Mammary epithelial cell (primary cell): ENCODE measurements at regions of chr17 and their contacts with region 1.

Region 1: GRCh38 chr17:76585818-76586593 is at the start of gene ST6GALNAC2:
- DNase-seq: peak; percentile 89
- H3K4me3 ChIP-seq: peak within 1 kb of the TSS; percentile 86 to 93 (median 92)
- H3K27ac ChIP-seq: peak within 1 kb of the TSS; percentile 93
- H3K4me1 ChIP-seq: peaks cover 39% of the 10 kb centered on the region
- H3K27me3 ChIP-seq: no peaks in the 10 kb centered on the region
- CTCF ChIP-seq: peak; percentile 17 to 64
- total RNA-seq, gene ST6GALNAC2: 65.1 to 221 TPM

Region 2: GRCh38 chr17:76432712-76433336 is 153.2 kb before region 1 on chr17:
- CTCF ChIA-PET with region 1: no interaction called
- dilution Hi-C with region 1: no loop called
- in situ Hi-C with region 1: no loop called
- intact Hi-C with region 1: no loop called
- DNase-seq: no peak
- H3K4me3 ChIP-seq: no peak overlapping the region
- H3K27ac ChIP-seq: no peak overlapping the region
- H3K4me1 ChIP-seq: peaks cover under 1% of the 10 kb centered on the region
- H3K27me3 ChIP-seq: no peaks in the 10 kb centered on the region
- CTCF ChIP-seq: peak; percentile 52 to 59

Region 3: GRCh38 chr17:76467366-76467765 is 118.6 kb before region 1 on chr17 and contains the start of gene AANAT:
- CTCF ChIA-PET with region 1: no interaction called
- dilution Hi-C with region 1: no loop called
- in situ Hi-C with region 1: no loop called
- intact Hi-C with region 1: loop called (anchors 1 kb)
- DNase-seq: no peak
- H3K4me3 ChIP-seq: no peak within 1 kb of the TSS
- H3K27ac ChIP-seq: no peak within 1 kb of the TSS
- H3K4me1 ChIP-seq: no peaks in the 10 kb centered on the region
- H3K27me3 ChIP-seq: no peaks in the 10 kb centered on the region
- CTCF ChIP-seq: no peak
- total RNA-seq, gene AANAT: not detected

Region 4: DNA sequence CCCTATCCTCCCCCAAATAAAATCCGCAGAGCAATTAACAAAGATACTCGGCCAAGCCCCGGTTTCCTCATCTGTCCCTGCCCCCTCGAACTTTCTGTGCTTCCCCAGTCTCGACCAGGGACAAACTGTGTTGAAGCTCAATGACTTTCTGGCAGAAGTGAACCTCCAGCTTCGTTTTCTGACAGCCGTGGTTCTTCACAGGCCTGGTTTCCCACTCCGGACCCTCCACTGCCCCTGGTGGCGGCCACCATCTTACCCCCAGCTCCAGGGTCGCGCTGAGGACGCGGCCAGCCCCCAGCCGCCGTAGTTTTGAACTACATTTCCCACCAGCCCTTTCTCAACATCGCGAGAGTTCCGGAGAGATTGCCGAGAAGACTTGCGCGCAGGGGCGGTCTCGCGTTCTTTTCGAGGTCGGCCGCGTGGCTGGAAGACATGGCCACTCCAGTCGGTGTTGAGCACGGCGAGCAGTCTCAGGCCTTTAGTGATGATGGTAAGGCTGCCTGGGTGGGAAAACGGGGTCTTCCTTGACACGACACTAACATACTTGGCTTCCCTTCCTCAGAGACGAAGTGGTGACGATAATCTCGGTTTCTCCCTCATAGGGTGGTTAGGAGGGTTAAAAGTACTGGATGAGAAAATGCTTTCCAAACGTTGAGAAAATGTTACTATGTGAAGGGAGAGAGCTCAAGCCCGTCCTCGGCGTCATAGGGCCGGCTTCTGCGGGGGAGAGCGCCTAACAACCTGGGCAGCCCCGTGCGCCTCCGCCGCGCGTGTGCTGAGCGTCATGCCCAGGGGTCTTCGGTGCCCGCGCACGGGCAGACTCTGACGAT is 28.4 kb before region 1 on chr17:
- CTCF ChIA-PET with region 1: no interaction called
- dilution Hi-C with region 1: no loop called
- in situ Hi-C with region 1: no loop called
- intact Hi-C with region 1: loop called (anchors 1 kb)
- DNase-seq: peak; percentile 93
- H3K4me3 ChIP-seq: peak overlapping the region; percentile 61 to 89 (median 86)
- H3K27ac ChIP-seq: peak overlapping the region; percentile 95
- H3K4me1 ChIP-seq: peaks cover 54% of the 10 kb centered on the region
- H3K27me3 ChIP-seq: no peaks in the 10 kb centered on the region
- CTCF ChIP-seq: peak; percentile 36 to 54

Region 5: DNA sequence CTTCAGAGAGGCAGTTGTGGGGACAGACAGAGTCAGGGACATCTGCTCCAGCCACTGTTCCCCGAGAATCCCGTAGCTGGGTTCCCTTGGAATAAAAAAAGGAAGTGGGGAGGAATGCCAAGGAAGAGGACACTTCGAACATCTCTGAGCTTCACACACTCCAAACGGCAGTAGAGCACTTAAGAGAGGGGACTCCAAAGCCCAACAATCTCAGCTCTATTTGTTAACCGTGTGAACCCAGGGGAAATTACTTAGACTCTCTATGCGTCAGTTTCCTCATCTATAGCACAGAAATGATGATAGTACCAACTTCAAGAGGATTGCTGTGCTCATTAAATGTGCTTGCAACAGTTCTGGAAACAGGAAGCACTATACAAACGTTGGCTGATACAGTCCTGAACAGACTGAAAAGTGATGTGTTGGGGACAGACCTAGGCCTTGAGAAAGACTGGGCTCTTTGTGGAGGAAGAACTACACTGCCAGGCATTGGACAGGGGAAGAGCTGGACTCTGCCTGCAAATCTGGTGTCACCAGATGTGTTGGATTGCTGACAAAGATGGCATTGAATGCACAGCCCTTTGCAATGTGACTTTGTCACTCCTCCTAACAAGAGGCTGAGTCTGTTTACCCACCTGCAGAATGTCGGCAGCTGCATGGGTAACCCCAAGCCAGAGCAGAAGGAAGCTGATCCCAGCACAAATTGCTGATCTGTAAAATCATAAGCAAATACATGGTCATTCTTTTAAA is 11.9 kb after region 1 on chr17:
- CTCF ChIA-PET with region 1: interaction called, 13 read pairs
- dilution Hi-C with region 1: no loop called
- in situ Hi-C with region 1: no loop called
- intact Hi-C with region 1: loop called (anchors 2 kb)
- DNase-seq: peak; percentile 69
- H3K4me3 ChIP-seq: no peak overlapping the region
- H3K27ac ChIP-seq: peak overlapping the region; percentile 82
- H3K4me1 ChIP-seq: peaks cover 61% of the 10 kb centered on the region
- H3K27me3 ChIP-seq: no peaks in the 10 kb centered on the region
- CTCF ChIP-seq: no peak

Region 6: GRCh38 chr17:76612977-76613851 is 27.2 kb after region 1 on chr17:
- CTCF ChIA-PET with region 1: no interaction called
- dilution Hi-C with region 1: no loop called
- in situ Hi-C with region 1: no loop called
- intact Hi-C with region 1: loop called (anchors 1 kb)
- DNase-seq: peak; percentile 72
- H3K4me3 ChIP-seq: no peak overlapping the region
- H3K27ac ChIP-seq: no peak overlapping the region
- H3K4me1 ChIP-seq: peaks cover 3% of the 10 kb centered on the region
- H3K27me3 ChIP-seq: no peaks in the 10 kb centered on the region
- CTCF ChIP-seq: peak; percentile 37 to 77

Region 7: GRCh38 chr17:76623271-76624146 is 37.5 kb after region 1 on chr17:
- CTCF ChIA-PET with region 1: interaction called, 20 read pairs
- dilution Hi-C with region 1: no loop called
- in situ Hi-C with region 1: no loop called
- intact Hi-C with region 1: loop called (anchors 1 kb)
- DNase-seq: peak; percentile 53
- H3K4me3 ChIP-seq: no peak overlapping the region
- H3K27ac ChIP-seq: peak overlapping the region; percentile 8
- H3K4me1 ChIP-seq: peaks cover 9% of the 10 kb centered on the region
- H3K27me3 ChIP-seq: no peaks in the 10 kb centered on the region
- CTCF ChIP-seq: peak; percentile 95 to 97

Region 8: DNA sequence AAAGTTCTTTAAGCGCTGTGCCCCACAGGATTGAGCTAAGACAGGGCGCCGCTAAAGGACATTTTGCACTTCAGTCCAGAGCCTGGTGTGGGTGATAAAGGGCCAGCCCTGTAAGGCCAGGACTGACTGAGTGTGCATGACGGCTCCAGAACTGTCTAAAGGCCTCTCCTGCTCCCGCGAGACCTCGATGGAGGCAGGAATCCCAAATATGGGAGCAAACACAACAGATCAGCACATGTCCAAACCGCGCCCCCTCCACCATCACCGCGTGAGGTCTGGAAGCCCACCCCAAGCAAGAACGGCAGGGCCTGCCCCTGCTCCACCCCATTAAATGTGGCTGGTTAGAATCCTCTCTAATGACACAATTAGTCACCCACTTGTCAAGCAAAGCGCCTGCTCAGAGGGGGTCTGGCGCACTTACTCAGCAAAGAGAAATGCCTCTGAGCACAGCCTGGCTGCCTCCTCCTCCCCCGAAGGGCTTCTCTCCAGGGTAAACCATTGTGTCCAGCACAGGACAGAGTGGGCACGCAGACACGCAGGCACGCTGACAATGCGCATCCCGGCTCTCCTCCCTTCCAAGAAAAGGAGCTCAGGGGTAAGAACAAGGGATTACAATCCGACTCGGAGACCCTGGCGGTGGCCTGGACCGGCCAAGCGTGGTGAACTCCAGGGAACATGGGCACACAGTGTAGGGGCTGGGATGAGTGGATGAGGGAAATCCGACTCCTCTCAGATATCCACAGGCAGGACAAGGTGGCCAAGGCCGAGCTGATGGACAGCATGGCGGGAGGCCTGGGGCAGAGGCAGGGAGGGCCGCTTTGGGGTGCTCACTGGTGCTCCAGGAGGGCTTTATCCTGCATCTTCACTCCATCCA is 123.3 kb after region 1 on chr17:
- CTCF ChIA-PET with region 1: no interaction called
- dilution Hi-C with region 1: no loop called
- in situ Hi-C with region 1: no loop called
- intact Hi-C with region 1: loop called (anchors 5 kb)
- DNase-seq: peak; percentile 80
- H3K4me3 ChIP-seq: peak overlapping the region; percentile 65 to 68 (median 67)
- H3K27ac ChIP-seq: peak overlapping the region; percentile 40
- H3K4me1 ChIP-seq: peaks cover 27% of the 10 kb centered on the region
- H3K27me3 ChIP-seq: no peaks in the 10 kb centered on the region
- CTCF ChIP-seq: no peak

Region 9: DNA sequence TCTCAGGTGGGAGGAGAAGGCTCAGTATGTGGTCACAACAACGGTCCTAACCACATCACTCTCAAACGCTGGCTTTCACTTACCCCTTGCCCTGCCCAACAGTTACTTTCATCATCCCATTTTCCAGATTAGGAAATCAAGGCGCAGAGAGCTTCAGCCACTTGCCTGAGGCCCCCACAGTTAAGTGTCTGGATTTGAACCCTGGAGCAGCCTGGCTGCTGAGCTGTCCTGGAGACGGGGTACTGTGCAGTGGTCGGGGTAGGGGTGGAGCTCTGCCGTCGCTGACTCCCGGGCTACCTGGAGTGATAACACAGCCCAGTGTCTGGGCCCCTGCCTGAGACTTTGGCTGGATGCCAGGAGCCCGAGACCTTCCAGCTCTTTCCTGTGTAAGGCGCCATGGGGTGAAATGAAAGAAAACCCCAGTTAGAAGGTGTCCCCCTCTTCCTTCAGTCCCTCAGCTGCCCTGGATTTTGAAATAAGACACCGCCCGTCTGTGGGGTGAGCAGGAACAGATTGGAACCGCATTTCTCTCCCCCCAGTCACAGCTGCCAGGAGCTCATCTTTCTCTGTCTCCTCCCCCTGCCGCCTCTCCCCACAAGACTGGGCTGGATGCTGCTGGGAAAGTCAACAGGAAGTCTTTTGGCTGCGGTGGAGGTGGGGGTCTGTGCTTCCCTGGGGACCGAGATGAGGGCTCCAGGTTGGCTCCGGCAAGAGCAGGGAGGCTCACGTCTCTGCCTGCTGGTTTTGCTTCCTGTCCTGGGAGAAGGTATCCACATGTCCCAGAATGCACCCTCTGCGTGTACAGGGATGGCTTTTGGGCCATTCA is 835.0 kb after region 1 on chr17:
- CTCF ChIA-PET with region 1: no interaction called
- dilution Hi-C with region 1: no loop called
- in situ Hi-C with region 1: no loop called
- intact Hi-C with region 1: no loop called
- DNase-seq: peak; percentile 74
- H3K4me3 ChIP-seq: no peak overlapping the region
- H3K27ac ChIP-seq: peak overlapping the region; percentile 76
- H3K4me1 ChIP-seq: peaks cover 78% of the 10 kb centered on the region
- H3K27me3 ChIP-seq: no peaks in the 10 kb centered on the region
- CTCF ChIP-seq: no peak